ENCODE measurements at regions of chr3 and their contacts with region 1.

Region 1: GRCh38 chr3:44301746-44302145 is 36.8 kb upstream of the TCAIM start:
- DNase-seq: no peak
- H3K4me3 ChIP-seq: no peak overlapping the region
- H3K27ac ChIP-seq: no peak overlapping the region
- H3K4me1 ChIP-seq: no peaks in the 10 kb centered on the region
- H3K27me3 ChIP-seq: no peaks in the 10 kb centered on the region
- CTCF ChIP-seq: no peak

Region 2: GRCh38 chr3:43442872-43443395 is 858.8 kb before region 1 on chr3:
- CTCF ChIA-PET with region 1: no interaction called
- POLR2A ChIA-PET with region 1: interaction called, 11 read pairs
- intact Hi-C with region 1: no loop called
- DNase-seq: no peak
- H3K4me3 ChIP-seq: no peak overlapping the region
- H3K27ac ChIP-seq: no peak overlapping the region
- H3K4me1 ChIP-seq: no peaks in the 10 kb centered on the region
- H3K27me3 ChIP-seq: no peaks in the 10 kb centered on the region
- CTCF ChIP-seq: no peak

Region 3: GRCh38 chr3:44510000-44510368 is 208.2 kb after region 1 on chr3:
- CTCF ChIA-PET with region 1: no interaction called
- POLR2A ChIA-PET with region 1: interaction called, 10 read pairs
- intact Hi-C with region 1: no loop called
- DNase-seq: no peak
- H3K4me3 ChIP-seq: peak overlapping the region; percentile 94
- H3K27ac ChIP-seq: no peak overlapping the region
- H3K4me1 ChIP-seq: peaks cover 7% of the 10 kb centered on the region
- H3K27me3 ChIP-seq: no peaks in the 10 kb centered on the region
- CTCF ChIP-seq: no peak